GM12878 (cell line): ENCODE measurements at regions of chr9 and their contacts with region 1.

Region 1: GRCh38 chr9:96425500-96426169 is 7.5 kb upstream of the ZNF367 start:
- DNase-seq: no peak
- ATAC-seq: peak; percentile 39; the same call in 1 of the 3 replicates
- H3K4me3 ChIP-seq: no peak overlapping the region
- H3K27ac ChIP-seq: no peak overlapping the region
- H3K4me1 ChIP-seq: peaks cover 6% of the 10 kb centered on the region
- H3K27me3 ChIP-seq: no peaks in the 10 kb centered on the region
- CTCF ChIP-seq: no peak
- EP300 ChIP-seq: 0 out of 4 replicates have a peak, but pooled peaks of 1 of the 2 experiments have one; percentile 19
- POLR2A ChIP-seq: no peak
- RAD21 ChIP-seq: no peak

Region 2: DNA sequence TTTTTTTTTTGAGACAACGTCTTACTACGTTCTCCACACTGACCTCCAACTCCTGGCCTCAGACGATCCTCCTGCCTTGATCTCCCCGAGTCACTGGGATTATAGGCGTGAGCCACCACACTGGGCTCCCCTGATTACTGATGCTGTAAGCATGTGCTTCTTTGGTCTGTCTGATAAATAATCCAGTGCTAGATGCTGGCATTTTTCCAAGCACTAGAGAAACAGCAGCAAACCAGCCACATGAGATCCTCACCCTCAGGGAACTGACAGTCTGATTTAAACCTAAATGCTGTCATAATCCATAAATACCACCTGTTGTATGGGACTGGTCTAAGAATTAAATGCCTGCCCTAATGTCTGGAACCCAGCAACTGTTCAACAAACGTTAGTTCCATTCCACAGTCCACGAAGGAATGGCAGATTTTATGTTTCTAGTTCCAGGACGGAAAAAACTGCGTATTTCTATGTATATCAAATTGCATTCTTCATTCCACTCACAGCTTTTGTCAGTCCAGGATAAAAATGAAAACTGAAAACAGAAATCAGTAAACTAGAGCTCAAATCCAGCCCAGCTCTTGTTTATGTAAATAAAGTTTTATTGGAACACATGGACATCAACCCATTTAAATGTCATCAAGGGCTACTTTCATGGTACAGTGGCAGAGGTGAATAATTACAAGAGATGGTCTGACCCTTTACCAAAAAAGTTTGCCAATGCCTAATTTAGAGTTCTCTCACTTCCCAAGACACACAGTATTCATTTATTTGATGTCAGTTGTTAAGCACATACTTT is 62.3 kb before region 1 on chr9:
- CTCF ChIA-PET with region 1: no interaction called
- POLR2A ChIA-PET with region 1: no interaction called
- RAD21 ChIA-PET with region 1: no interaction called
- SMC1A ChIA-PET with region 1: no interaction called
- in situ Hi-C with region 1: no loop called
- intact Hi-C with region 1: no loop called
- DNase-seq: no peak
- ATAC-seq: no peak
- H3K4me3 ChIP-seq: no peak overlapping the region
- H3K27ac ChIP-seq: no peak overlapping the region
- H3K4me1 ChIP-seq: no peaks in the 10 kb centered on the region
- H3K27me3 ChIP-seq: no peaks in the 10 kb centered on the region
- CTCF ChIP-seq: no peak
- EP300 ChIP-seq: no peak
- POLR2A ChIP-seq: no peak
- RAD21 ChIP-seq: no peak

Region 3: DNA sequence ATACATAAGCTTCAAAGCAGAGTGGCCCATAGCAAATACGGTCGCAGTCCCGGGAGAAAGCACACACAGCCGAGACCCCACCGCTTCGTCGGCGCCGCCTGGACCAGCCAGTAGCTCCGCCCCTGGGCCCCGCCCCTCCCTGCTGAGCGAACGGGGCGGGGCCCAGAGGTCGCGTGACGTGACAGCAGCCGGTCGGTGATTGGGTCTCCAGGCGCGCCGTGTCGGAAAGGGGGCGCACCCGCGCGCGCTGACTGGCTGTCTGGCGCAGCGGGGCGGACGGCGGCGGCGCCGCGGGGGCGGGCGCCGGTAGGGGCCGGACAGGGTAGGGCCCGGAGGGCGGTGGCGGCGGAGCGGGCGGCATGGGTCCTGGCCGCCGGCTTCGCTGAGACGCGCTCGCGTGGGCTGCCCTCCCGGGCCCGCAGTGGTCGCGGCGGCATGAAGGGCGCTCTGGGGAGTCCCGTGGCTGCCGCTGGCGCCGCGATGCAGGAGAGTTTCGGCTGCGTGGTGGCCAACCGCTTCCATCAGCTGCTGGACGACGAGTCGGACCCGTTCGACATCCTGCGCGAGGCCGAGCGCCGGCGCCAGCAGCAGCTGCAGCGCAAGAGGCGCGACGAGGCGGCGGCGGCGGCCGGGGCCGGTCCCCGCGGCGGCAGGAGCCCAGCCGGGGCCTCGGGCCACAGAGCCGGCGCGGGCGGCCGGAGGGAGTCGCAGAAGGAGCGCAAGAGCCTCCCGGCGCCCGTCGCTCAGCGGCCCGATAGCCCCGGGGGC is 24.4 kb after region 1 on chr9 and contains the start of gene HABP4:
- CTCF ChIA-PET with region 1: no interaction called
- POLR2A ChIA-PET with region 1: interaction called, 4 read pairs
- RAD21 ChIA-PET with region 1: interaction called, 3 read pairs
- SMC1A ChIA-PET with region 1: interaction called, 16 read pairs
- in situ Hi-C with region 1: no loop called
- intact Hi-C with region 1: no loop called
- DNase-seq: peak; percentile 48
- ATAC-seq: peak; percentile 99
- H3K4me3 ChIP-seq: peak within 1 kb of the TSS; percentile 68
- H3K27ac ChIP-seq: no peak within 1 kb of the TSS
- H3K4me1 ChIP-seq: peaks cover 6% of the 10 kb centered on the region
- H3K27me3 ChIP-seq: peaks cover 0 to 3% of the 10 kb centered on the region in 2 experiments; a peak in 1 of 4 replicates
- CTCF ChIP-seq: no peak
- EP300 ChIP-seq: no peak
- POLR2A ChIP-seq: peak; percentile 78
- RAD21 ChIP-seq: no peak
- polyA plus RNA-seq, gene HABP4: 4.4 to 5.7 TPM

Region 4: GRCh38 chr9:97076238-97076637 is 650.6 kb after region 1 on chr9:
- CTCF ChIA-PET with region 1: no interaction called
- POLR2A ChIA-PET with region 1: no interaction called
- RAD21 ChIA-PET with region 1: no interaction called
- SMC1A ChIA-PET with region 1: no interaction called
- in situ Hi-C with region 1: no loop called
- intact Hi-C with region 1: no loop called
- DNase-seq: no peak
- ATAC-seq: no peak
- H3K4me3 ChIP-seq: no peak overlapping the region
- H3K27ac ChIP-seq: no peak overlapping the region
- H3K4me1 ChIP-seq: no peaks in the 10 kb centered on the region
- H3K27me3 ChIP-seq: no peaks in the 10 kb centered on the region; a peak in 1 of 4 replicates
- CTCF ChIP-seq: no peak
- EP300 ChIP-seq: no peak
- POLR2A ChIP-seq: no peak
- RAD21 ChIP-seq: no peak